Heart left ventricle (tissue), 16 donors: ENCODE measurements at regions of chr7 and their contacts with region 1.

Region 1: GRCh38 chr7:158976849-158977593 is 120.7 kb downstream of the DYNC2I1 start:
- DNase-seq: peak; percentile 73 to 90 (median 81)
- ATAC-seq: peak; percentile 82 to 89 (median 85)
- H3K4me3 ChIP-seq: peak overlapping the region in 10 of 12 donors; percentile 12 to 58 (median 43)
- H3K27ac ChIP-seq: peak overlapping the region in 5 of 12 donors; percentile 28 to 52 (median 31)
- H3K4me1 ChIP-seq: peaks cover 0 to 19% (median 6%) of the 10 kb centered on the region in 12 donors
- H3K27me3 ChIP-seq: no peaks in the 10 kb centered on the region
- CTCF ChIP-seq: peak; percentile 84 to 95 (median 89)
- POLR2A ChIP-seq: no peak

Region 2: DNA sequence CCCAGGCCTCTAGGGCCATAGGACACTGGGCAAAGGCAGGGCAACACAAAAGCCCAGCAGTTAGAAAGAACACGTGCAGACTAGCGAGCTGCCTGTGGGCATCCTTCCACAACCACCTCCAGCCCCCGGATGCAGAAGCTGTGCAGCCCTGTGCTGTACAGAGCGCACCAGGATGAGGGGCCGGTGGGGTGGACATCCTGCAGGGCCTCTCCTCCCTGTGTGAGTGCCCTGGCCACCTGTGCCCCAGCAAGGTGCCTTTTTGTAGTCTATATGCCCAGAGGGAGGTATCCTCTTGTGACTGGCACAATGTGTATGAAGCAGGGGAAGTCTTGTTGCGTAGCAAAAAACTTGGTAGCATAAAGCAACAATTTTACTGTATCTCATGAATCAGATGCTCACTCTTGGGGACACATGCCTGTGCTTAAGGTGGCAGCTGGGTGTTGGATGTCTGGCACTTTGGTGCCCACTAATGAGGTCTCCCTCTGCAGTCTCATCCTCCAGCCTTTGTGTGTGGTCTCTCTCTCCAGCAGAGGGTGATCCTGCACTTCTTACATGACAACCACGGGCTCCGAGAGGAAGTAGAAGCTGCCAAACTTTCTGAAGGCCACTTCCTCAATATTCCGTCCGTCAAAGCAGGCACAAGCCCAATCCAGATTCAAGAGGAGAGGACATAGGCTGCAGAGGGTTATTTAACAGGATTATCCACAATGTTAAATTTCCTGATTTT is 281.1 kb before region 1 on chr7:
- intact Hi-C with region 1: loop called (anchors 1 to 5 kb)
- DNase-seq: peak in 4 of 5 donors; percentile 71 to 78 (median 74)
- ATAC-seq: peak; percentile 96 to 99 (median 98)
- H3K4me3 ChIP-seq: peak overlapping the region in 4 of 12 donors; percentile 1 to 30 (median 22)
- H3K27ac ChIP-seq: peak overlapping the region in 10 of 12 donors; percentile 1 to 60 (median 27)
- H3K4me1 ChIP-seq: peaks cover 0 to 12% (median 4%) of the 10 kb centered on the region in 12 donors
- H3K27me3 ChIP-seq: no peaks in the 10 kb centered on the region
- CTCF ChIP-seq: peak; percentile 48 to 76 (median 68)
- POLR2A ChIP-seq: no peak

Region 3: GRCh38 chr7:158885624-158886023 is 91.4 kb before region 1 on chr7:
- intact Hi-C with region 1: loop called in 1 of 10 experiments (anchors 10 kb)
- DNase-seq: no peak
- ATAC-seq: no peak
- H3K4me3 ChIP-seq: no peak overlapping the region
- H3K27ac ChIP-seq: no peak overlapping the region
- H3K4me1 ChIP-seq: peaks cover 0 to 5% (median 0%) of the 10 kb centered on the region in 12 donors
- H3K27me3 ChIP-seq: no peaks in the 10 kb centered on the region
- CTCF ChIP-seq: peak in 9 of 12 donors; percentile 7 to 59 (median 35)
- POLR2A ChIP-seq: no peak